ENCODE measurements at regions of chr13 and their contacts with region 1.

Region 1: GRCh38 chr13:27620377-27621115 is at the start of gene LNX2:
- DNase-seq: peak; percentile 99
- ATAC-seq: peak; percentile 98
- total RNA-seq, gene LNX2: 11.4 TPM

Region 2: DNA sequence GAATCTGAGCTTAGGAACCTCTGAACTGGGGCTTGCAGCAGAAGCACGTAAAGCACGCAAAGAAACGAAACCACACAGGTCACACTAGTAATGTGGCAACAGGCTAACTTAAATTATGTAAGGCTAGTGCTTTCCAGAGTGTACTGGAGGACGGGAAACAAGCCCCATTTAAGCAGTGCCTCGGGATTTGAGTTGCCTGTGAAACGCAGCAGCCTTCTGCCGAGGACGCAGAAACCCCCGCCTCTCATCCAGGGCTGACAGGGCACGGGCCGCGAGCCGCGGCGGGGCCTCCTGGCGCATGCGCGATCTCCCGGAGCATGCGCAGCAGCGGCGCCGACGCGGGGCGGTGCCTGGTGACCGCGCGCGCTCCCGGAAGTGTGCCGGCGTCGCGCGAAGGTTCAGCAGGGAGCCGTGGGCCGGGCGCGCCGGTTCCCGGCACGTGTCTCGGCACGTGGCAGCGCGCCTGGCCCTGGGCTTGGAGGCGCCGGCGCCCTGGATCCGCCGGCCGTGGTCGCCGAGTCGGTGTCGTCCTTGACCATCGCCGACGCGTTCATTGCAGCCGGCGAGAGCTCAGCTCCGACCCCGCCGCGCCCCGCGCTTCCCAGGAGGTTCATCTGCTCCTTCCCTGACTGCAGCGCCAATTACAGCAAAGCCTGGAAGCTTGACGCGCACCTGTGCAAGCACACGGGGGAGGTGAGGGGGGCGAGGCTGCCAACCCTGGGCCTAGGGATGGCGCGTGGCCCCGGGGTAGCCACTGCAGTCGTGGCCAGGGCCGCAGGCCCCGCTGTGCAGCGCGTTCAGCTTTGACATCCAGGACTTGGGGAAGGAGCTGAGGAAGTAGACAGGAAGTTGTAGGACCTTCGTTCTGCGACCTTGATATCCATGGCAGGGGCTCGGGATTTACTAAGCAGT is 196.0 kb before region 1 on chr13 and contains the start of gene GTF3A:
- intact Hi-C with region 1: loop called (anchors 10 kb)
- DNase-seq: peak; percentile 93
- ATAC-seq: peak; percentile 95
- total RNA-seq, gene GTF3A: 235 TPM

Region 3: GRCh38 chr13:27565818-27566217 is 54.7 kb before region 1 on chr13:
- intact Hi-C with region 1: loop called (anchors 1 kb)
- DNase-seq: no peak
- ATAC-seq: no peak